ENCODE measurements at regions of chr1 and their contacts with region 1.

Region 1: DNA sequence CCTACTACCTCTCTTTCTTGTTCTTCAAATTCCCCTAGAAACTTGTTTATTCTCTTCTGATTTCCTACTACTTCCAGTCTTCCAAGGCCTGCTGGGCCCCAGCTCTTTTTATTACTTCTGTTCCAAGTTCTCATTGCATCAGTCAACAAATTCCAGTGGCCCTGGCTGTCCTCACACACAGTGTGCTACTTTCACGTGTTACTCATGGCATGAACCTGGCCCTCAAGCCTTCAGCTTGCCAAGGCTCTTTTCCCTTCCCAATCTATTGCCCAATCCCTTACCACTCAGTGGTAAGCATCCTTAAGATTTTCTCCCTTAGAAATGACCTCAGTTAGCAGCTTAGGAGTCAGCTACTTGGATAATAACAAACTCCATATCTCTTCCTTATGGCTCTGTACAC is 613.5 kb downstream of the LMO4 start:
- DNase-seq: no peak
- CTCF ChIP-seq: no peak

Region 2: GRCh38 chr1:87318056-87318650 is 624.0 kb before region 1 on chr1:
- in situ Hi-C with region 1: loop called (anchors 10 kb)
- DNase-seq: no peak
- CTCF ChIP-seq: no peak

Region 3: DNA sequence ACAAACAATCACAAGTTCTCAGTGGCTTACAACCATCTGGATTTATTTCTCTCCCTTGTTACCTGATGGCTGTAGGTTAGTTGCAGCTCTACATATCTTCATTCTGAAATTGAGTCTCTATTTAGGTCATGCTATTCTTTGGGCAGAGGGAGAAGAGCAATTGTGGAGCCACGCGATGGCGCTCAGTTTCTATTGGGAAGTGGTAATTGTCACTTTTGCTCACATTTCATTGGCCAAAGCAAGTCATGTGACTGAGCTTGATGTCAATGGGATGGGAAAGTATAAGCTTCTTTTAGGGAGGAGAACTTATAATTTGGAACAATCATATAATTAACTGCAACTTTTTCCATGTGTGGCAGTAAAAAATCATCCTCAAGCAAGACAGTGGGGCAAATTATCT is 447.0 kb before region 1 on chr1:
- in situ Hi-C with region 1: no loop called
- DNase-seq: no peak
- CTCF ChIP-seq: no peak

Measured in GM13976 (cell line).